Sciatic nerve (tissue), 2 donors: ENCODE measurements at regions of chr5 and their contacts with region 1.

Region 1: GRCh38 chr5:123051206-123051605 is 14.7 kb upstream of the PPIC start:
- DNase-seq: no peak
- ATAC-seq: no peak

Region 2: GRCh38 chr5:122304471-122305215 is 746.6 kb before region 1 on chr5:
- intact Hi-C with region 1: loop called (anchors 5 kb)
- DNase-seq: no peak
- ATAC-seq: no peak

Region 3: DNA sequence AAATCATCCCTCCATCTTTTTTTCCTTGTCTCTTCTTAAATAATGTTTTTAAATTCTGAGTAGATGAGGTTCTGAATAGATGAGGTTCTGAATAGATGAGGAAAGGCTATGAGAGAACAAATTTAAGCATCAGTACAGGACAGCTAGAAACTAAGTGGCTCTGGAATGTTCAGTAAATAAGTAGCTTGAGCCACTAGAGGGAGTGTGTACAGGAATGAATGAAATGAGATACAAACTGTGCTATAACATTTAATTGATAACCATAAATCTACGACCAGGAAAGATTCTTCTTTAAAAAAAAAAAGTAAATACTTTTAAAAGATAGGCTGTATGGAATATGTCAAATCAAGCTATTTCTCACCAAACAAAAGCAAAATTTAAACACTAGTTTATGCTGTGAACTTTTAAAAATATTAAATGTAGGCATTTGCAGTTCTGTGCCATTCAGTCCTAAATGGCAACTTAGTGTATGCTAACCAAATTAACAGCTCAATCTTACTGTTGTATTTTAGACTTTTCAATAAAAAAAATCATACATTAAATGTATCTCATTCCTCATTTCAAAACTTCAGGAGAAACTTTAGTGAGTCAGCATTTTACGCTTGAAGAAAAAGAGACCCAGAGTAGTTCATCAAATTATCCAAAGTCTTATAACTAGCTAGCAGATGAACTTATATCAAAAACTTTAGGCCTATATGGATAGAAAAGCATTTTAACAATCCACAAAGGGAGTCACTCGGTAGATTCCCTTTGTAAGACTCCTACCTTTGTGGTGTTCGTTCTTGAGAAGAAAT is 346.8 kb before region 1 on chr5:
- intact Hi-C with region 1: no loop called
- DNase-seq: no peak
- ATAC-seq: peak; percentile 78